ENCODE measurements at regions of chr16 and their contacts with region 1.

Region 1: GRCh38 chr16:53111078-53111791 is 56.4 kb downstream of the CHD9 start:
- DNase-seq: no peak
- ATAC-seq: peak; percentile 65
- H3K4me3 ChIP-seq: no peak overlapping the region
- H3K27ac ChIP-seq: no peak overlapping the region; the same call in 2 of the 3 replicates
- H3K4me1 ChIP-seq: peaks cover 9 to 19% of the 10 kb centered on the region in 2 experiments; a peak in 4 of 5 replicates
- H3K27me3 ChIP-seq: no peaks in the 10 kb centered on the region
- CTCF ChIP-seq: no peak
- EP300 ChIP-seq: no peak
- POLR2A ChIP-seq: no peak
- RAD21 ChIP-seq: no peak

Region 2: GRCh38 chr16:53099318-53100130 is 11.7 kb before region 1 on chr16:
- CTCF ChIA-PET with region 1: no interaction called
- POLR2A ChIA-PET with region 1: interaction called, 12 read pairs
- in situ Hi-C with region 1: no loop called
- intact Hi-C with region 1: no loop called
- DNase-seq: peak; percentile 89 to 96 (median 92)
- ATAC-seq: peak; percentile 95
- H3K4me3 ChIP-seq: peak overlapping the region; percentile 47
- H3K27ac ChIP-seq: peak overlapping the region; percentile 82
- H3K4me1 ChIP-seq: peaks cover 16 to 28% of the 10 kb centered on the region in 2 experiments
- H3K27me3 ChIP-seq: no peaks in the 10 kb centered on the region
- CTCF ChIP-seq: no peak
- EP300 ChIP-seq: peak; percentile 52
- POLR2A ChIP-seq: peak; percentile 57
- RAD21 ChIP-seq: no peak

Measured in K562 (cell line).